ENCODE measurements at regions of chr11 and their contacts with region 1.

Region 1: DNA sequence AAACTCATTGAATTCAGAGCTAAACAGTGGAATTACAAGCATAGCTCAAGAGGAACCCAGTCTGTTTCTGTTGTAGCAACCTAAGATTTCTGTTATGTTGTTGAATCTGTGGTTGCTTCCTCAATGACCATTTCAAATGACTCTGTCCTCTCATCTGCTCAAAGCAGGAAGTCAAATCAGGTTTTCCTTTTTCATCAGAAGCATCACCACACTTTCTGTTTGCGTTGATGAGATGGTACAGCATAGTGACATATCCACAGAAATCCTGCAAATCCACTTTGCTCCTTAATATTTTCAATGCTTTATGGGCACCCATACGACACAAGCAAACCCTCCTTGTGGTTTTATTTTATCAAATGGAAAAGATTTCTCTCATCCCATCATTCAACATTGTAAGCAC is 12.6 kb upstream of the UCP2 start:
- DNase-seq: no peak
- ATAC-seq: peak; percentile 45
- H3K4me3 Mint-ChIP-seq: peak overlapping the region; percentile 36
- H3K27ac Mint-ChIP-seq: peak overlapping the region; percentile 92
- H3K4me1 Mint-ChIP-seq: peaks cover 96% of the 10 kb centered on the region
- H3K27me3 Mint-ChIP-seq: no peaks in the 10 kb centered on the region
- CTCF ChIP-seq: no peak

Region 2: DNA sequence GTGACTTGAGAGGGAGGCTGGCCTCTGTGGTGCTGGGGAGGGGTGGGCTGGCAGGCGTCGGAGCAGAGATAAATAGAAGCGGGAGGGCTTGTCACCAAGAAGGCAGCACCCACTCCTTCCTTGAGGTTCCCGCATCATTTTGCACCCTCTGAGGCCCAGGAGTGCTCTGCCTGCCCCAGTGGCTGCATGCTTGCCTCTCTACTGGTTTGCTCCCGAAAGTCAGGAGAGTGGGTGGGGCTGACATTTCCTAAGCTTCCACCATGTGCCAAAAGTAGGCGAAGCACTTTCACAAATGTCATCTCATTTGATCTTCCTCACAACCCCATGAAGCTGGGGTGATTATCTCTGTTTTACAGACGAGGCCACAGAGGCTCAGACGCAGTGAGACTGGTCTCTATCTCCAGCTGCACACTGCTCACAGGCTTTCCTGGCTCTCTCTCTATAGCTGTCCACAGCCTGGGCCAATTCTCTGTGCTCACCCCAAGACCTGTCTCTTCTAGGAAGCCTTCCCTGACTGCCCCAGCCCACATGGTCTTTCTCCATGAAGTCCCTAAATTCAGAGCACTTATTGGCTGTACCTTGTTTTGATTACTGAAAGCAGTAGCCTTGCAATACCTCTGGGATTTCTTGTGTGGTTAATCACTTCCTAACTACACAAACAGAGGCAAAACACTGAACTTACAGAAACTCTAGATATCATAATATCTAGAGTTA is 16.3 kb after region 1 on chr11:
- CTCF ChIA-PET with region 1: no interaction called
- POLR2A ChIA-PET with region 1: interaction called, 9 read pairs
- intact Hi-C with region 1: loop called (anchors 1 kb)
- DNase-seq: no peak
- ATAC-seq: peak; percentile 87
- H3K4me3 Mint-ChIP-seq: peak overlapping the region; percentile 70
- H3K27ac Mint-ChIP-seq: peak overlapping the region; percentile 92
- H3K4me1 Mint-ChIP-seq: peaks cover 74% of the 10 kb centered on the region
- H3K27me3 Mint-ChIP-seq: no peaks in the 10 kb centered on the region
- CTCF ChIP-seq: no peak

Region 3: GRCh38 chr11:74030723-74031676 is 35.8 kb after region 1 on chr11:
- CTCF ChIA-PET with region 1: no interaction called
- POLR2A ChIA-PET with region 1: no interaction called
- intact Hi-C with region 1: loop called (anchors 5 kb)
- DNase-seq: no peak
- ATAC-seq: no peak
- H3K4me3 Mint-ChIP-seq: no peak overlapping the region
- H3K27ac Mint-ChIP-seq: no peak overlapping the region
- H3K4me1 Mint-ChIP-seq: peaks cover 8% of the 10 kb centered on the region
- H3K27me3 Mint-ChIP-seq: no peaks in the 10 kb centered on the region
- CTCF ChIP-seq: no peak

Measured in activated B cell treated with CpG ODN at 0.5 μM for 24 hours (primary cell).